ENCODE measurements at regions of chr2 and their contacts with region 1.

Region 1: GRCh38 chr2:166417669-166418068 is 41.9 kb upstream of the SCN9A start:
- DNase-seq: peak; percentile 70
- ATAC-seq: peak; percentile 70
- H3K4me3 ChIP-seq: no peak overlapping the region; a peak in 1 of 6 replicates
- H3K27ac ChIP-seq: no peak overlapping the region
- H3K4me1 ChIP-seq: peaks cover 30% of the 10 kb centered on the region
- H3K27me3 ChIP-seq: no peaks in the 10 kb centered on the region
- CTCF ChIP-seq: peak; percentile 55
- EP300 ChIP-seq: no peak
- POLR2A ChIP-seq: no peak
- RAD21 ChIP-seq: no peak

Region 2: DNA sequence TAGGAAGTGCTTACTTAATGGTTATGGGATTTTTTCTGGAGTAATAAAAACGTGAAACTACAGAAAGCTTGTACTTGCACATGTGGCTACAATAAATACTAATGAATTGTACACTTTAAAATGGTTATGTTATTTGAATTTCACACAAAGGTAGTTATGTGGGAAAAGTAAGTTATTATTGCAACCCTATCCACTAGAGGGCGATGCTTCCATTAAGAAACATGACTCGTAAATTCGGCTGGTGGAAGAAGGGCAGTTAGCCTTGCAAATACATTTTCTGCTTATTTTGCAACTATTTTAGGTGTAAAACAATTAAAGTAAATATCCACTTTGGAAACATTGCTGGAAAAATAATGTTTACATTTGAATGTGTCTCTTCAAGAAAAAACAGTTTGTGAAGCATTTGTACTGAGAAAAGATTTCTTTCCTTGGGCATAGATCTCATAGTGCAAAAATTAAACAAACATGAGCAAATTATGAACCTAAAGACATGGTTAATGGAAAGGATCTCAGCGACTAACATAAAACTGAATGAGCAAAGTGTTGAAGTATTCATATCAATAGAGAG is 1016.3 kb before region 1 on chr2:
- CTCF ChIA-PET with region 1: no interaction called
- POLR2A ChIA-PET with region 1: no interaction called
- in situ Hi-C with region 1: no loop called
- intact Hi-C with region 1: loop called (anchors 5 kb)
- DNase-seq: peak; percentile 67
- ATAC-seq: peak; percentile 70; the same call in 2 of the 3 replicates
- H3K4me3 ChIP-seq: no peak overlapping the region
- H3K27ac ChIP-seq: no peak overlapping the region
- H3K4me1 ChIP-seq: peaks cover 5% of the 10 kb centered on the region; the same call in 1 of the 2 replicates
- H3K27me3 ChIP-seq: no peaks in the 10 kb centered on the region
- CTCF ChIP-seq: peak; percentile 82
- EP300 ChIP-seq: no peak
- POLR2A ChIP-seq: no peak
- RAD21 ChIP-seq: peak; percentile 49; the same call in 1 of the 2 replicates

Region 3: GRCh38 chr2:166057370-166058164 is 360.1 kb before region 1 on chr2:
- CTCF ChIA-PET with region 1: interaction called, 3 read pairs
- POLR2A ChIA-PET with region 1: no interaction called
- in situ Hi-C with region 1: no loop called
- intact Hi-C with region 1: loop called (anchors 1 kb)
- DNase-seq: peak; percentile 47
- ATAC-seq: no peak
- H3K4me3 ChIP-seq: no peak overlapping the region
- H3K27ac ChIP-seq: no peak overlapping the region
- H3K4me1 ChIP-seq: peaks cover 6% of the 10 kb centered on the region; the same call in 1 of the 2 replicates
- H3K27me3 ChIP-seq: no peaks in the 10 kb centered on the region
- CTCF ChIP-seq: peak; percentile 62
- EP300 ChIP-seq: no peak
- POLR2A ChIP-seq: no peak
- RAD21 ChIP-seq: peak; percentile 37; the same call in 1 of the 2 replicates

Region 4: GRCh38 chr2:166361351-166362153 is 56.1 kb before region 1 on chr2:
- CTCF ChIA-PET with region 1: interaction called, 19 read pairs
- POLR2A ChIA-PET with region 1: no interaction called
- in situ Hi-C with region 1: no loop called
- intact Hi-C with region 1: loop called (anchors 1 kb)
- DNase-seq: peak; percentile 79
- ATAC-seq: peak; percentile 96
- H3K4me3 ChIP-seq: no peak overlapping the region
- H3K27ac ChIP-seq: peak overlapping the region; percentile 5
- H3K4me1 ChIP-seq: peaks cover 32% of the 10 kb centered on the region
- H3K27me3 ChIP-seq: no peaks in the 10 kb centered on the region
- CTCF ChIP-seq: peak; percentile 83
- EP300 ChIP-seq: peak in 1 of 2 experiments; percentile 45; a peak in 2 of 4 replicates
- POLR2A ChIP-seq: no peak
- RAD21 ChIP-seq: peak; percentile 78

Region 5: GRCh38 chr2:166375736-166376487 is 41.8 kb before region 1 on chr2 and contains the start of gene SCN9A:
- CTCF ChIA-PET with region 1: no interaction called
- POLR2A ChIA-PET with region 1: interaction called, 3 read pairs
- in situ Hi-C with region 1: no loop called
- intact Hi-C with region 1: loop called (anchors 5 kb)
- DNase-seq: peak; percentile 82
- ATAC-seq: peak; percentile 92
- H3K4me3 ChIP-seq: peak within 1 kb of the TSS; percentile 75 to 85 (median 82)
- H3K27ac ChIP-seq: peak within 1 kb of the TSS; percentile 68
- H3K4me1 ChIP-seq: peaks cover 48% of the 10 kb centered on the region
- H3K27me3 ChIP-seq: no peaks in the 10 kb centered on the region; a peak in 1 of 5 replicates
- CTCF ChIP-seq: peak; percentile 52
- EP300 ChIP-seq: peak in 1 of 2 experiments; percentile 18; a peak in 2 of 4 replicates
- POLR2A ChIP-seq: peak; percentile 84 to 90
- RAD21 ChIP-seq: peak; percentile 33; the same call in 1 of the 2 replicates
- total RNA-seq, gene SCN9A: 11.8 and 15.3 TPM in 2 replicates

Region 6: DNA sequence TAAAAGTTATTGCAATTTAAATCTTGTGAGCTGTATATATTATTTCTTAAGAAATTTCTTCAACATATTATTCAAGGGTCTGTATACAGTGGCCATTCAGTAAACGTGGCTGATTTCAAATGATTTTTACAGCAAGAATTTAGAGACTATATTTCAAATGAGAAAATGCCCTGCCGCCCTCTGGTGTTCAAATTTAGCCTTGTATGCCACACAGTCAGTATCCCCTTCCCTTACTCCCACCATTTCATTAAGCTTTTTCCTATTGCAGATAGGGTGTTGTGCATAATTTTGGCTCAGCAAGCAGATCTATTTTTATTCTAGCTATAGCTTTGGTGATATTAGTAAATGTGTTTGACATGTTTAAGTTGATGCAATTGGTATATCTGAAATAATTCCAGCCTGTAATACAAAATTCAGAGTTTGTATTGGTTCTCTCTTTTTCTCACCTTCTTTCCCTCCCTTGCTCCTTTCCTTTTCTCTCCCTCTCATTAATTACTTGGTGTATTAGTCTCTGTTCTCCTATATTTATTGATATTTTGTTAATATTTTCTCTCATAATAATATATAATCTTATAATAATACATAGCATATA is 99.1 kb after region 1 on chr2:
- CTCF ChIA-PET with region 1: interaction called, 8 read pairs
- POLR2A ChIA-PET with region 1: no interaction called
- in situ Hi-C with region 1: no loop called
- intact Hi-C with region 1: loop called (anchors 5 kb)
- DNase-seq: peak; percentile 25
- ATAC-seq: peak; percentile 83
- H3K4me3 ChIP-seq: no peak overlapping the region
- H3K27ac ChIP-seq: no peak overlapping the region
- H3K4me1 ChIP-seq: no peaks in the 10 kb centered on the region
- H3K27me3 ChIP-seq: no peaks in the 10 kb centered on the region
- CTCF ChIP-seq: peak; percentile 69
- EP300 ChIP-seq: no peak
- POLR2A ChIP-seq: no peak
- RAD21 ChIP-seq: no peak